ENCODE measurements at regions of chr19 and their contacts with region 1.

Region 1: DNA sequence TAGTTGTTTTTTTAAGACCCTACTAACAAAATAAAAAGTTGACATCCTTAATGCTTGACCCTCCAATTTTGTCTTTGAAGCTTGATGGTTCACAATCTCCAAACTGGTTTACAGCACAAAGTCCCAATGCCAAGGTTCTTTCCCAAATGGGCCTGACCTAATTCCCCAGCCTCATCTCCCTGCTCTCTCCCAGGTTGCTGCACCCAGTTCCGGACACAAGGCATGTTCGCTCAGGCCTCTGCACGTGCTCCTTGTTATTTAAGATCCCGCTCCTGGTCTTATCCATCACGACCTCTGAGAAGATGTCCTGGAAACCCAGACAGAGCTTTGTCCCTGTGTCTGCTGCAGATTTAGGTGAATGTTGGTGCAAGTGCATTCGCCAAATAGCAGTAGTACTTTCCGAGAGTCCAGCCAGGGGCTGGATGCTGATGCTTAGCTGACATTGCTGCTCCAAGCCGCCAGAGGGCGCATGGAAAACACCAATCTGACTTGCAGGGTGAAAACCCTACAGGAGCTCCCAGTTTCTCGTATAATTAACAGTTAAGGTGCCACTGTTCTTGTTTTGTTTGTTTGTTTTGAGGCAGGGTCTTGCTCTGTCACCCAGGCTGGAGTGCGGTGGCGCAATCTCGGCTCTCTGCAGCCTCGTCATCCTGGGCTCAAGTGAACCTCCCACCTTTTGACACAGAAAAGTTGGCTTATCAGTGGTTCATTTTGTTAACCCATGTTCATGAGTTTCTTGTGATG is 18.5 kb downstream of the LYPD3 start:
- DNase-seq: no peak
- ATAC-seq: peak; percentile 91
- H3K4me3 ChIP-seq: no peak overlapping the region
- H3K27ac ChIP-seq: no peak overlapping the region
- H3K4me1 ChIP-seq: no peaks in the 10 kb centered on the region
- H3K27me3 ChIP-seq: peaks cover 0 to 2% of the 10 kb centered on the region in 2 experiments; a peak in 1 of 4 replicates
- CTCF ChIP-seq: peak; percentile 90 to 96 (median 91); a peak in 5 of 6 replicates
- EP300 ChIP-seq: no peak
- POLR2A ChIP-seq: no peak
- RAD21 ChIP-seq: peak; percentile 94

Region 2: GRCh38 chr19:43433358-43433673 is 13.6 kb before region 1 on chr19:
- CTCF ChIA-PET with region 1: interaction called, 20 read pairs
- POLR2A ChIA-PET with region 1: no interaction called
- RAD21 ChIA-PET with region 1: interaction called, 5 read pairs
- SMC1A ChIA-PET with region 1: interaction called, 6 read pairs
- in situ Hi-C with region 1: no loop called
- intact Hi-C with region 1: no loop called
- DNase-seq: no peak
- ATAC-seq: no peak
- H3K4me3 ChIP-seq: no peak overlapping the region
- H3K27ac ChIP-seq: no peak overlapping the region
- H3K4me1 ChIP-seq: no peaks in the 10 kb centered on the region
- H3K27me3 ChIP-seq: no peaks in the 10 kb centered on the region
- CTCF ChIP-seq: no peak
- EP300 ChIP-seq: no peak
- POLR2A ChIP-seq: no peak
- RAD21 ChIP-seq: no peak

Region 3: DNA sequence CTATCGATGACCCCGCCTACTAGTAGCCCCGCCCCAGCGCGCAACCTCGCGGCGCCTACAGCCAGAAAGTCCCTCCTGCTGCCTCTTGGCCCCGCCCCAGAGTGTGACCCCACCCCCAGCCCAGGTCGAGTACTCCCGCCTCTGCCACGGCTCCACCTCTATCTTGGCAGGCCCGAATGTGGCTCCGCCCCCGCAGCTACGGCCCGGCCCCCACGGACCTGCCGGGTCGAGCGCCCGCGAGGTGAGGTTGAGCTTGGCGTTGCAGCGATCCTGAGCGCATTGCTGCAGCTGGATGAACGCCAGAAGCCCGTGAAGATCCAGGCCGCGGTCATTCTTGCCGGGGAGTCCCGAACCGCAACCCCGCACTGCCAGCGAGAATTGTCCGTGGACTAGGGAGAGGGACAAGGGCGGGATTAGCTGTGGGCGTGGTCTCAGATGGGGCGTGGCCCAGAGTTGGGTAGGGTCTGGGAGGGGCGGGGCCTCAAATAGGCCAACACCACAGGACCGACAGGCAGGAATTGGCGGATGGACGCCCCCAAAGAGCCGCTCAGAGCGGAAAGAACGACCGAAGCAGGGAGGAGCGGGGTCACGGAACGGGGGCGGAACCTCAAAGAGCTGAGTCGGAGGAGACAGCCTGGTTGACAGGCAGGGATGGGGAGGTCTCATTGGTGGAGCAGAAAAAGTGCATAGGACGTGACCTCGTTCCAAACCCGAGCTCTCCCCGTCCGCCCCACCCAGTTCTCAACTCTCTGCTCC is 16.6 kb after region 1 on chr19:
- CTCF ChIA-PET with region 1: interaction called, 31 read pairs
- POLR2A ChIA-PET with region 1: interaction called, 3 read pairs
- RAD21 ChIA-PET with region 1: interaction called, 8 read pairs
- SMC1A ChIA-PET with region 1: interaction called, 21 read pairs
- in situ Hi-C with region 1: no loop called
- intact Hi-C with region 1: no loop called
- DNase-seq: peak; percentile 73
- ATAC-seq: peak; percentile 97
- H3K4me3 ChIP-seq: peak overlapping the region; percentile 77
- H3K27ac ChIP-seq: no peak overlapping the region
- H3K4me1 ChIP-seq: peaks cover 8% of the 10 kb centered on the region; the same call in 1 of the 2 replicates
- H3K27me3 ChIP-seq: no peaks in the 10 kb centered on the region
- CTCF ChIP-seq: no peak
- EP300 ChIP-seq: no peak
- POLR2A ChIP-seq: no peak
- RAD21 ChIP-seq: no peak

Region 4: GRCh38 chr19:43495082-43495481 is 48.2 kb after region 1 on chr19:
- CTCF ChIA-PET with region 1: interaction called, 13 read pairs
- POLR2A ChIA-PET with region 1: no interaction called
- RAD21 ChIA-PET with region 1: interaction called, 4 read pairs
- SMC1A ChIA-PET with region 1: interaction called, 3 read pairs
- in situ Hi-C with region 1: no loop called
- intact Hi-C with region 1: loop called (anchors 5 kb)
- DNase-seq: no peak
- ATAC-seq: no peak
- H3K4me3 ChIP-seq: no peak overlapping the region
- H3K27ac ChIP-seq: no peak overlapping the region
- H3K4me1 ChIP-seq: no peaks in the 10 kb centered on the region
- H3K27me3 ChIP-seq: no peaks in the 10 kb centered on the region
- CTCF ChIP-seq: no peak
- EP300 ChIP-seq: no peak
- POLR2A ChIP-seq: no peak
- RAD21 ChIP-seq: no peak

Region 5: GRCh38 chr19:43519436-43520088 is 72.6 kb after region 1 on chr19:
- CTCF ChIA-PET with region 1: interaction called, 393 read pairs
- POLR2A ChIA-PET with region 1: interaction called, 4 read pairs
- RAD21 ChIA-PET with region 1: interaction called, 186 read pairs
- SMC1A ChIA-PET with region 1: interaction called, 194 read pairs
- in situ Hi-C with region 1: loop called (anchors 5 kb)
- intact Hi-C with region 1: loop called (anchors 1 kb)
- DNase-seq: peak; percentile 33
- ATAC-seq: peak; percentile 77
- H3K4me3 ChIP-seq: no peak overlapping the region
- H3K27ac ChIP-seq: no peak overlapping the region
- H3K4me1 ChIP-seq: peaks cover under 1% of the 10 kb centered on the region; the same call in 1 of the 2 replicates
- H3K27me3 ChIP-seq: no peaks in the 10 kb centered on the region
- CTCF ChIP-seq: peak; percentile 76 to 90 (median 88)
- EP300 ChIP-seq: no peak
- POLR2A ChIP-seq: no peak
- RAD21 ChIP-seq: peak; percentile 95

Region 6: GRCh38 chr19:43555185-43555770 is 108.4 kb after region 1 on chr19:
- CTCF ChIA-PET with region 1: interaction called, 13 read pairs
- POLR2A ChIA-PET with region 1: no interaction called
- RAD21 ChIA-PET with region 1: interaction called, 3 read pairs
- SMC1A ChIA-PET with region 1: interaction called, 12 read pairs
- in situ Hi-C with region 1: no loop called
- intact Hi-C with region 1: no loop called
- DNase-seq: no peak
- ATAC-seq: peak; percentile 94
- H3K4me3 ChIP-seq: no peak overlapping the region
- H3K27ac ChIP-seq: no peak overlapping the region
- H3K4me1 ChIP-seq: no peaks in the 10 kb centered on the region
- H3K27me3 ChIP-seq: no peaks in the 10 kb centered on the region
- CTCF ChIP-seq: peak; percentile 86 to 95 (median 88)
- EP300 ChIP-seq: no peak
- POLR2A ChIP-seq: no peak
- RAD21 ChIP-seq: peak; percentile 75

Region 7: GRCh38 chr19:43784981-43785808 is 338.3 kb after region 1 on chr19:
- CTCF ChIA-PET with region 1: no interaction called
- POLR2A ChIA-PET with region 1: no interaction called
- RAD21 ChIA-PET with region 1: no interaction called
- SMC1A ChIA-PET with region 1: no interaction called
- in situ Hi-C with region 1: no loop called
- intact Hi-C with region 1: loop called (anchors 10 kb)
- DNase-seq: no peak
- ATAC-seq: peak; percentile 70
- H3K4me3 ChIP-seq: no peak overlapping the region
- H3K27ac ChIP-seq: peak overlapping the region; percentile 74
- H3K4me1 ChIP-seq: peaks cover 49% of the 10 kb centered on the region
- H3K27me3 ChIP-seq: no peaks in the 10 kb centered on the region
- CTCF ChIP-seq: peak; percentile 98 to 100 (median 100); a peak in 5 of 6 replicates
- EP300 ChIP-seq: no peak
- POLR2A ChIP-seq: no peak
- RAD21 ChIP-seq: peak; percentile 95